Activated CD8-positive, alpha-beta memory T cell treated with anti-CD3 and anti-CD28 coated beads, Interleukin-2, amount 10 ng/mL, durations not matched to agents 7 days and 5 days (primary cell): ENCODE measurements at regions of chr17 and their contacts with region 1.

Region 1: GRCh38 chr17:50865984-50866774 is at the start of gene TOB1:
- DNase-seq: peak; percentile 97
- ATAC-seq: peak; percentile 75
- H3K4me3 Mint-ChIP-seq: peak within 1 kb of the TSS; percentile 98
- H3K27ac Mint-ChIP-seq: peak within 1 kb of the TSS; percentile 96
- H3K4me1 Mint-ChIP-seq: peaks cover 43% of the 10 kb centered on the region
- H3K27me3 Mint-ChIP-seq: peaks cover 14% of the 10 kb centered on the region
- total RNA-seq, gene TOB1: 34.1 to 47.5 TPM

Region 2: DNA sequence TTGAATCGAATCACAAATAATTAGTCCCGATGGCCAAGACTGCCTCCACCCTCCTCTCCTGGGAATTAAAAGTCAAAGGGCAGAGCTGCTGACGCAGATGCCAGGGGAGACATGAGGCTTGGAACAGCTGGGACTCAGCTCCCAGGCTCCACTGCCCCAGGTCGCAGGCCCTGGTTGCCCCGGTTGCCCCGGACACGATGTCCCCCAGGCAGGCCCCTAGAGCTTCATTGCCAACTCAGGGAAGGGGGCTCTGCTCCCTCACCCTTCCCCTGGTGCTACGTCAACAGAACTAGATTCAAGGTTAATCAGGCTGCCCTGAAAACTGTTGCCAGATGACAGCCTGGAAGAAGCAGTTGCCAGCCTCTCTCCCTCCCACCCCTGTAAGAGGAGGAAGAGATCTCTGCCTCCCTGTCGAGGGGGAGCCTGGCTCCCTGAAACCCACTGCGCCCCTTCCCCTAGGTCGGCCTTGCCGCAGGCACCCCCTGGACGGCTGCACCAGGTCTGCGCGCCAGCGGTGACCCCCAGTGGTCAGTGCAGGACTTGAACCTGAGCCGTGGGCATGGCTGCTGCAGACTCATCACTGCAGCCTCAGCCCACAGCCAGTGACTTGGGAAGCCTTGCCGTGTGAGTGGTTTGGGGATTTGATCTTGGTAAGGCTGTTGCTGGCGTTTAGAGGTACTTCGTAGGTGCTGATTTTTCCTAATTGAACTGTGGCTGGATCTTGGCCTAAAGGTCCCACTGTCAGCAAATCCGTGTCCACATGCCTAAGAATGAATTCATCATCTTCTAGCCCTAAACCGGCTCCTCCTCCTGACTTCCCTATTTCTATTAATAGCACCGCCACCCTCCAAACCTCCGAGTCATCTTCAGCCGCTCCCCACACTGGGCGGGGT is 84.1 kb after region 1 on chr17:
- CTCF ChIA-PET with region 1: interaction called, 78 read pairs
- DNase-seq: peak; percentile 72
- ATAC-seq: peak; percentile 88
- H3K4me3 Mint-ChIP-seq: no peak overlapping the region
- H3K27ac Mint-ChIP-seq: no peak overlapping the region
- H3K4me1 Mint-ChIP-seq: peaks cover 20% of the 10 kb centered on the region
- H3K27me3 Mint-ChIP-seq: peaks cover 6% of the 10 kb centered on the region

Region 3: DNA sequence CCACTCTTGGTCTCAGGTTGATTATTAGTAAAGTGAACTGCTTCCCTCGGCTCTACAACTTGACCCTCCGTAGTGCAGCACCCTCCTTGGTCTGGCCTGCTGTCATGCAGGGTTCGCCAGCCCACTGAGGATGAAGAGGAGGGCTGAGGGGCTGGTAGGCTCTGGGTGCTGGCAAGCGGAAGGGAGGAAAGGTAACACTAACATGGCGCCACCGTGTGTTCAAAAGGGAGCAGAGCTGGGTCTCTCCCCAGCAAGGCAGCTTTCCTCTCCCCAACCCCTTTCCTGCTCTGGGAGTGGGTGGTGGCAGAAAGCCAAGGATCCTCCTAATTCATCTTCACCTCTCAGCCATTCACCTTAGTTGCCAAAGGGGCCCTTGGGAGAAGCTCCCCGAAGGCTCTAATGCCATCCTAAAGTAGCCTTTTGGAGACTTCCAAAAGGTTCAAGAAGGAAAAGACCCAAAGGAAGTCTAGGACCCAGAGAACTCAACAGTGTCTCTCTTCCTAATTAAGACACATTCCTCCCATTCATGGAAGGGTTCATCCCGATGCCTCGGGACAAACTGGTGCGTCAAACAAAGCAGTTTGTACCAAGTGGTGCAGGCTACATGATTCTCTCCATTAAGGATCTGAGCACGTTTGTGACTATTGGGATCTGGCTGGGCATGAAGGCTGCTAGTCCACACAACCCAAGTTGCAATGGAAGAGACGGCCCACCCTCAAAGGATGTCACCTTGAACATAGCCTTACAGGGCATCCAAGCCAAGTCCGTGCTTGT is 90.8 kb after region 1 on chr17:
- CTCF ChIA-PET with region 1: interaction called, 18 read pairs
- DNase-seq: peak; percentile 73
- ATAC-seq: peak; percentile 91
- H3K4me3 Mint-ChIP-seq: no peak overlapping the region
- H3K27ac Mint-ChIP-seq: peak overlapping the region; percentile 43
- H3K4me1 Mint-ChIP-seq: peaks cover 7% of the 10 kb centered on the region
- H3K27me3 Mint-ChIP-seq: peaks cover 4% of the 10 kb centered on the region